ENCODE measurements at regions of chr3 and their contacts with region 1.

Region 1: GRCh38 chr3:52238761-52239701 is at the start of gene TWF2:
- DNase-seq: peak; percentile 92
- ATAC-seq: peak; percentile 90
- H3K4me3 ChIP-seq: peak within 1 kb of the TSS; percentile 75 to 99 (median 93)
- H3K4me3 Mint-ChIP-seq: peak within 1 kb of the TSS; percentile 99
- H3K27ac ChIP-seq: peak within 1 kb of the TSS; percentile 53 to 63
- H3K27ac Mint-ChIP-seq: peak within 1 kb of the TSS; percentile 93
- H3K4me1 ChIP-seq: peaks cover 41 to 56% of the 10 kb centered on the region in 2 donors
- H3K4me1 Mint-ChIP-seq: peaks cover 61% of the 10 kb centered on the region
- H3K27me3 ChIP-seq: no peaks in the 10 kb centered on the region
- H3K27me3 Mint-ChIP-seq: no peaks in the 10 kb centered on the region
- CTCF ChIP-seq: peak; percentile 68
- total RNA-seq, gene TWF2: 53.5 and 60.3 TPM in 2 replicates

Region 2: GRCh38 chr3:52220380-52221026 is 18.5 kb before region 1 on chr3:
- CTCF ChIA-PET with region 1: interaction called, 237 read pairs
- POLR2A ChIA-PET with region 1: interaction called, 28 read pairs
- intact Hi-C with region 1: loop called (anchors 1 kb)
- DNase-seq: peak; percentile 85
- ATAC-seq: peak; percentile 59
- H3K4me3 ChIP-seq: no peak overlapping the region
- H3K4me3 Mint-ChIP-seq: peak overlapping the region; percentile 66
- H3K27ac ChIP-seq: no peak overlapping the region
- H3K27ac Mint-ChIP-seq: peak overlapping the region; percentile 86
- H3K4me1 ChIP-seq: peaks cover 64 to 90% of the 10 kb centered on the region in 2 donors
- H3K4me1 Mint-ChIP-seq: peaks cover 78% of the 10 kb centered on the region
- H3K27me3 ChIP-seq: no peaks in the 10 kb centered on the region
- H3K27me3 Mint-ChIP-seq: no peaks in the 10 kb centered on the region
- CTCF ChIP-seq: peak; percentile 83

Region 3: GRCh38 chr3:53375019-53375418 is 1136.0 kb after region 1 on chr3:
- CTCF ChIA-PET with region 1: no interaction called
- POLR2A ChIA-PET with region 1: no interaction called
- intact Hi-C with region 1: no loop called
- DNase-seq: peak; percentile 59
- ATAC-seq: no peak
- H3K4me3 ChIP-seq: no peak overlapping the region
- H3K4me3 Mint-ChIP-seq: no peak overlapping the region
- H3K27ac ChIP-seq: no peak overlapping the region
- H3K27ac Mint-ChIP-seq: no peak overlapping the region
- H3K4me1 ChIP-seq: no peaks in the 10 kb centered on the region
- H3K4me1 Mint-ChIP-seq: no peaks in the 10 kb centered on the region
- H3K27me3 ChIP-seq: peaks cover 0 to 9% (median 0%) of the 10 kb centered on the region in 4 experiments
- H3K27me3 Mint-ChIP-seq: peaks cover 36% of the 10 kb centered on the region
- CTCF ChIP-seq: peak; percentile 78

Measured in B cell (primary cell).